Sigmoid colon (tissue), 7 donors: ENCODE measurements at regions of chr1 and their contacts with region 1.

Region 1: DNA sequence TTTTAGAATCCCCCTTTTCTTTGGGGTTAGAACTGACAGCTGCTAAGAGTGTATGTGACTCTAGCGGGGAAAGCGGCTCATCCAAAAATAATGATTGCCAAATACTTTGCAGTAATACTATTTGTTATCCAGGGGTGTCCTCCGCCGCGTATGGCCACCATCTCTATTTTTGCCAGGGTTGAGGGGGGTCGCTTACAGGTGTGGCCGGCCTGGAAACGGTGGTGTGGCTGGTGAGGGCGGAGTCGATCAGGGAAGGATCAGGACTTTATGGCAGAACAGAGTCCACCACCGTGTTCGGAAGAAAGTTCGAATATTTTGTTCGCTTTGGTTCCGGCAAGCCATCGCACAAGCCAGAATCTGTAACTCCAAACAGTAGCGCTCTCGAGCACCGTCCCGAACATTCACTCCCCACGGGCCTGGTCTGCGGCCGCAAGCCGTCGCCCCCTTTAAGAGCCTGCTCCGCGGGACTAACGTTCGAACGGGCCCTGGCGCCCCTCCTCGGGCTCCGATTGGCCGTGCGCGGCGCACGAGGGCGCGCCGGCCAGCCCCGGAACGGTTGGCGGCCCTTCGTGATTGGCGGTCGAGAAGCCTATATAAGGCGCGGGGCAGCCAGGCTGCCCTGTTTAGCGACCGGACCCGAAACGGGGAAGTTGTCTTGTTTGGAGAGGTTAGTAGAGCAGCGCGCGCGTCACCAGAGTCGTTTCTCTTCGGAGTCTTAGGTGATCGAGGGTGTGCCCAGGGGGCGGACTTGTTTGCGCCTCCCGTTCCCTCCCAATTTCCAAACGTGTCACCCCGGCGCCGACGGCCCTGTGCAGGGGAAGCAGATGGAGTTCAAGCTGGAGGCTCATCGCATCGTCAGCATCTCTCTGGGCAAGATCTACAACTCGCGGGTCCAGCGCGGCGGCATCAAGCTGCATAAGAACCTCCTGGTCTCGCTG is at the start of gene IER5:
- DNase-seq: peak; percentile 98
- H3K4me3 ChIP-seq: peak within 1 kb of the TSS; percentile 65 to 97 (median 84)
- H3K27ac ChIP-seq: peak within 1 kb of the TSS; percentile 90 to 99 (median 95)
- H3K4me1 ChIP-seq: peaks cover 0 to 38% (median 34%) of the 10 kb centered on the region in 4 donors
- H3K27me3 ChIP-seq: no peaks in the 10 kb centered on the region
- CTCF ChIP-seq: no peak
- EP300 ChIP-seq: no peak
- POLR2A ChIP-seq: peak; percentile 100
- total RNA-seq, gene IER5: 7.7 to 11.5 (median 8.5) TPM

Region 2: GRCh38 chr1:181021811-181022434 is 66.4 kb before region 1 on chr1:
- intact Hi-C with region 1: loop called (anchors 5 kb)
- DNase-seq: peak; percentile 82
- H3K4me3 ChIP-seq: peak overlapping the region; percentile 89 to 99 (median 98)
- H3K27ac ChIP-seq: peak overlapping the region; percentile 90 to 97 (median 96)
- H3K4me1 ChIP-seq: peaks cover 5 to 20% (median 18%) of the 10 kb centered on the region in 4 donors
- H3K27me3 ChIP-seq: no peaks in the 10 kb centered on the region
- CTCF ChIP-seq: no peak
- EP300 ChIP-seq: no peak
- POLR2A ChIP-seq: no peak

Region 3: DNA sequence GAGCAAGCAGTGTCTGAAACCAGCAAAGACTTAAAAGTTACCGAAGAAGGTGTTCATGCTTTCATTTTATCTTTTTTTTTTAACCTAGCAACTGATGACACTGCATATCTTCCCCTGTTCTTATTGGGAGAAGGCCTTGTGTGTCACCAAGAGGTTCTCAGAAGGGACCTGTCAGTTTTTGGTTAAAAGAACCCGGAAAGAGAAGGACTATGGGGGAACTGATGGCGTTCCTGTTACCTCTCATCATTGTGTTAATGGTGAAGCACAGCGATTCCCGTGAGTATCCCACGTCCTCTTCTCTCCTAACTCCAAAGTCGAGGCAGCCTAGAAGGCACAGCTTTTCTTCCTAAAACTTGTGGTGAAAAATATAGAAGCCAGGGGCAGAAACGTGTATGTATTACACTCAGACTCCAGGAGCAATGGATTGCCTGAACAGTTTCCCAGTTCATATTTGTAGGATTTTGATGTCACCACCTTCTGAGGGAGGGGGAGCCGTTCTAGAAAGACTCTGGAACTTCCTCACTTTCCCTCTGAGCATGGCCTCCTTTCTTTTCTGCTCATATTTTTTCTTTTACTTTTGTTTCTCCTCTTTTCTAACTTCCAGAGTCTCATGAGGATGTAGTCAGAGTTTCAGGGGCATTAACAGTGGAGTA is 54.4 kb before region 1 on chr1 and contains the start of gene MR1:
- intact Hi-C with region 1: loop called (anchors 2 kb)
- DNase-seq: no peak
- H3K4me3 ChIP-seq: peak within 1 kb of the TSS; percentile 36 to 52 (median 49)
- H3K27ac ChIP-seq: peak within 1 kb of the TSS; percentile 88 to 92 (median 92)
- H3K4me1 ChIP-seq: peaks cover 0 to 48% (median 28%) of the 10 kb centered on the region in 4 donors
- H3K27me3 ChIP-seq: no peaks in the 10 kb centered on the region
- CTCF ChIP-seq: no peak
- EP300 ChIP-seq: no peak
- POLR2A ChIP-seq: peak in 1 of 2 donors; percentile 68
- total RNA-seq, gene MR1: 10.3 to 12.2 (median 11.0) TPM

Region 4: GRCh38 chr1:181073638-181074037 is 14.7 kb before region 1 on chr1:
- intact Hi-C with region 1: no loop called
- DNase-seq: no peak
- H3K4me3 ChIP-seq: no peak overlapping the region
- H3K27ac ChIP-seq: peak overlapping the region in 2 of 4 donors; percentile 45 to 50
- H3K4me1 ChIP-seq: peaks cover 0 to 32% (median 14%) of the 10 kb centered on the region in 4 donors
- H3K27me3 ChIP-seq: no peaks in the 10 kb centered on the region
- CTCF ChIP-seq: no peak
- EP300 ChIP-seq: peak in 1 of 4 donors; percentile 40
- POLR2A ChIP-seq: no peak

Region 5: GRCh38 chr1:181105134-181106021 is 17.0 kb after region 1 on chr1:
- intact Hi-C with region 1: loop called (anchors 2 kb)
- DNase-seq: peak; percentile 98
- H3K4me3 ChIP-seq: peak overlapping the region; percentile 51 to 80 (median 70)
- H3K27ac ChIP-seq: peak overlapping the region; percentile 88 to 92 (median 90)
- H3K4me1 ChIP-seq: peaks cover 0 to 24% (median 18%) of the 10 kb centered on the region in 4 donors
- H3K27me3 ChIP-seq: no peaks in the 10 kb centered on the region
- CTCF ChIP-seq: no peak
- EP300 ChIP-seq: no peak
- POLR2A ChIP-seq: peak; percentile 82 to 87